Esophagus muscularis mucosa (tissue), 4 donors: ENCODE measurements at regions of chr13 and their contacts with region 1.

Region 1: DNA sequence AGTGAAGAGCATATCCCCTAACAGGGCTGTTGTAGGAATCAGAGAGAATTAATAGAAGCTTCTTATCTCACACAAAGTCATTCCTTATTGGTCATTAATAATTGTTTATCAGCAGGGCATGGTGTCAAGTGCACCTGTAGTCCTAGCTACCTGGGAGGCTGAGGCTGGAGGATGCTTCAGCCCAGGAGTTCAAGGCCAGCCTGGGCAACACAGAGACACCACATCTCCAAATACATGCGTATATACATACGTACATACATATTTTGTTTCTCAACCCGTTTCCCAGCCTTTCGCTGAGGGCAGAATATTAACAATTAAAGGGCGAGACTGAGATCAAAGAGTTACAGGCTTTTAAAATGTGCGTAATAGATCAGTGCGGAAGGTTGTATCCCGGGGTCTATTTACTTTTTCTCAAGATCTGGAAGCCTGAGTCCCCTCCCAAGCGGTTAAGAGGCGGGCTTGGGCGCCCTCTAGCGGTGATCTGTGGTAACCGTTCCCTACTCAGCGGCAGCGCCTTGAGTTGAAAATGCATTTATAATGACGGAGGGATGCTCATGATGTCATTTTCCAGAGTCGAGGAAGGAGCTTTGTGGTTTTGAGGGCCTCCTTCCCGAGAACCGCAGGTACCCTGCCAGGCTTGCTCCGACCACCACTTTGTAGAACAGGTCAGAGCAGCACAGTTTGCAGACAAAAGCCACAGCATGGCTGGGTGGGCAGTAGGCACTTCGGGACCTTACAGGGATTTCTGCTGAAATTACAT is 169.6 kb upstream of the GPR12 start:
- DNase-seq: no peak
- H3K4me3 ChIP-seq: no peak overlapping the region
- H3K27ac ChIP-seq: no peak overlapping the region
- H3K4me1 ChIP-seq: peaks cover 0 to 8% (median 3%) of the 10 kb centered on the region in 4 donors
- H3K27me3 ChIP-seq: no peaks in the 10 kb centered on the region
- CTCF ChIP-seq: peak; percentile 81 to 98 (median 94)
- EP300 ChIP-seq: no peak
- POLR2A ChIP-seq: no peak

Region 2: DNA sequence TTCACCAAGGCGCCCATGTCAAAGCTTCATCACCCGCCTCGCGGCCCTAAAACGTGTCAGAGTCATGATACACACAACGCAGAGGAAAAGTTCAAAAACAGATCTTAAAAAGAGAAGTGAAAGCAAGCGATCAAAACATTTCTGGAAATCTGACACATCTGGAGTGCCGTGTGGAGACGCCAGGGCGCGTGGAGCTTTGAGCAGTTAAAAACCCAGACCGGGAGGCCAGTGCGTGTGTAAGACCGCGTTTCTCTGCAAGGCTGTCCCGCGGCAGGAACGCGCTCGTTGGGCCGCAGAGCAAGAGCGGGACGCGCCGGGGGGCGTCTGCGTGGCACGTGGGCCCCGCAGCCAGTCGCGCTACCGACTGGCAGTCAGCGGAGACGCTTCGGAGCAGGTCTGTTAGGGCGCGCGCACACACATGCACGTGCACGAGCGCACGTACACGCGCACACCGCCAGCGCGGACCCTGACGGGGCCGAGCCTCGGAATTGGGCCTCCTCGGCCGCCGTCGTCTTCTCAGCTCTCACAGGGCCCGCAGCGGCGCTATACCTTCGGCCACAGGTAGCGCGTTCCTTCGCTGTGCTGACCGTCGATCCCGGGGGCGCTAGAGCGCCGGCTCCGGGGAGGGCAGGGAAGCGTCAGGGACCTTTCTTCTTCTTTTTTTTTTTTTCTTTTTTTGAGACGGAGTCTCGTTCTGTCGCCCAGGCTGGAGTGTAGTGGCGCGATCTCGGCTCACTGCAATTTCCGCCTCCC is 743.9 kb before region 1 on chr13:
- intact Hi-C with region 1: loop called (anchors 5 kb)
- DNase-seq: peak; percentile 94
- H3K4me3 ChIP-seq: peak overlapping the region; percentile 68 to 82 (median 76)
- H3K27ac ChIP-seq: peak overlapping the region; percentile 78 to 89 (median 84)
- H3K4me1 ChIP-seq: peaks cover 7 to 26% (median 18%) of the 10 kb centered on the region in 4 donors
- H3K27me3 ChIP-seq: no peaks in the 10 kb centered on the region
- CTCF ChIP-seq: peak; percentile 17 to 35 (median 28)
- EP300 ChIP-seq: no peak
- POLR2A ChIP-seq: no peak

Region 3: GRCh38 chr13:27086599-27087265 is 156.6 kb after region 1 on chr13:
- intact Hi-C with region 1: no loop called
- DNase-seq: no peak
- H3K4me3 ChIP-seq: no peak overlapping the region
- H3K27ac ChIP-seq: no peak overlapping the region
- H3K4me1 ChIP-seq: peaks cover 0 to 21% (median 18%) of the 10 kb centered on the region in 4 donors
- H3K27me3 ChIP-seq: no peaks in the 10 kb centered on the region
- CTCF ChIP-seq: no peak
- EP300 ChIP-seq: no peak
- POLR2A ChIP-seq: no peak